Right ventricle myocardium inferior (tissue), 1 donor: ENCODE measurements at regions of chr1 and their contacts with region 1.

Region 1: GRCh38 chr1:7290971-7291970 is 479.8 kb upstream of the VAMP3 start:
- DNase-seq: peak; percentile 67
- ATAC-seq: peak; percentile 85

Region 2: GRCh38 chr1:7334475-7335035 is 43.3 kb after region 1 on chr1:
- intact Hi-C with region 1: no loop called
- DNase-seq: no peak
- ATAC-seq: no peak

Region 3: GRCh38 chr1:7366955-7367665 is 75.8 kb after region 1 on chr1:
- intact Hi-C with region 1: loop called (anchors 5 kb)
- DNase-seq: no peak
- ATAC-seq: peak; percentile 2

Region 4: GRCh38 chr1:7418442-7419080 is 127.3 kb after region 1 on chr1:
- intact Hi-C with region 1: no loop called
- DNase-seq: no peak
- ATAC-seq: no peak